Activated CD4-positive, alpha-beta T cell treated with anti-CD3 and anti-CD28 coated beads, Interleukin-2, amount 10 ng/mL, durations not matched to agents 24 days and 14 days (primary cell): ENCODE measurements at regions of chr13 and their contacts with region 1.

Region 1: GRCh38 chr13:50760751-50761150 is 82.7 kb downstream of the DLEU7 start:
- DNase-seq: no peak
- H3K4me3 Mint-ChIP-seq: no peak overlapping the region
- H3K27ac Mint-ChIP-seq: no peak overlapping the region
- H3K4me1 Mint-ChIP-seq: peaks cover 9% of the 10 kb centered on the region
- H3K27me3 Mint-ChIP-seq: peaks cover 6% of the 10 kb centered on the region

Region 2: DNA sequence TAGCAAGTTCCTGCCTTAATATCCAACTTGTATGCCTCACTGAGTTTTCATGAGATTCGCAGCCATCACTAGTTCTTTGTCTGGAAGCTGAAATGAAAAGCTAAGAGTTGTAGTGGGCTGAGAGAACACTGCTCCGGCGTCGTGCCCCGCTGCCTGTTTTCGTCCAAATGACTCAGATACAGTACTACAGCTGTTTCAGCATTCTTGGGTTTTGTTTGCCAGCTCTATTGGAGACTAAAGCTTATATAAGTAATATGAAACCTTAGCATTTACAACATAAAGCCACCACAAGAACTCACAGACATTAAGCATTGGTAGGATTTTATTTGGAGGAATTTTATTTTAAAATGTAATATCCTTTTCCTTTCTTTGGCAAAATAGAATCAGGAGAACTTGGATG is 217.0 kb before region 1 on chr13:
- intact Hi-C with region 1: no loop called
- DNase-seq: no peak
- H3K4me3 Mint-ChIP-seq: no peak overlapping the region
- H3K27ac Mint-ChIP-seq: no peak overlapping the region
- H3K4me1 Mint-ChIP-seq: no peaks in the 10 kb centered on the region
- H3K27me3 Mint-ChIP-seq: peaks cover 13% of the 10 kb centered on the region

Region 3: GRCh38 chr13:50626101-50626547 is 134.6 kb before region 1 on chr13:
- intact Hi-C with region 1: no loop called
- DNase-seq: no peak
- H3K4me3 Mint-ChIP-seq: no peak overlapping the region
- H3K27ac Mint-ChIP-seq: no peak overlapping the region
- H3K4me1 Mint-ChIP-seq: no peaks in the 10 kb centered on the region
- H3K27me3 Mint-ChIP-seq: peaks cover 17% of the 10 kb centered on the region

Region 4: DNA sequence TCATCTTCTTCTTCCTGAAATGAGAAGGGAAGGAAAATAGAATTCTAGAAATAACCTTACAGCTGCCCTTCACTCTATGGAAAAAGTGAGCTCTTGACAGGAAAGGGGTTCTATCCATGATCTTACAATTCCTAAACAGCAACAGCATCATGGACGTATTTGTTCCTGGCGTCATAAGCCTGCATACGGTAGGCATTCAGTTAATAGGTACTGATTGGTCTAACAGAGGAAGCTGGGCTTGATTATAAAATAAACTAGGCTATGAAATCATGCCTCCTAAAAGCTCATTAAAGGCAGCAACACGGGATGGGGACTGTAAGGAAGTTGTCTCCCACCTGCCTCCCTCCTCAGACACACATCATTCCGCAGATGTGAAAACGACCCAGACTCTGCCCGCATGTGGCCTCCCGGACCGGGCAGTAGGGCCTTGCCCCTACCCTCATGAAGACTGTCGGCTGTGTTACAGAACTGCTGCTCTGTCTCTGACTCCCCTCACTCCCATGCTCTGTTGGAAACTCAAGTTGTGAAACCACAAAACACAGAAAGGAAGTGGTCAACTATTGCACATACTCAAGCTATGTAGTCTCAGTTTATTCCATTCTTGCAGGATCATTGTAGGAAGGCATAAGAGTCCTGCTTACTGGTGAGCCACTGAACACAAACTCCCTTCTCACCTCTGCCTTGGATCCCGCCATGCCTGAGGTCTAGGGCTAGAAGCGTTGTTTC is 47.1 kb before region 1 on chr13:
- intact Hi-C with region 1: loop called (anchors 1 kb)
- DNase-seq: peak; percentile 79
- H3K4me3 Mint-ChIP-seq: peak overlapping the region; percentile 66
- H3K27ac Mint-ChIP-seq: peak overlapping the region; percentile 23
- H3K4me1 Mint-ChIP-seq: peaks cover 15% of the 10 kb centered on the region
- H3K27me3 Mint-ChIP-seq: peaks cover 21% of the 10 kb centered on the region